Dorsolateral prefrontal cortex (tissue), 120 donors: ENCODE measurements at regions of chr11 and their contacts with region 1.

Region 1: DNA sequence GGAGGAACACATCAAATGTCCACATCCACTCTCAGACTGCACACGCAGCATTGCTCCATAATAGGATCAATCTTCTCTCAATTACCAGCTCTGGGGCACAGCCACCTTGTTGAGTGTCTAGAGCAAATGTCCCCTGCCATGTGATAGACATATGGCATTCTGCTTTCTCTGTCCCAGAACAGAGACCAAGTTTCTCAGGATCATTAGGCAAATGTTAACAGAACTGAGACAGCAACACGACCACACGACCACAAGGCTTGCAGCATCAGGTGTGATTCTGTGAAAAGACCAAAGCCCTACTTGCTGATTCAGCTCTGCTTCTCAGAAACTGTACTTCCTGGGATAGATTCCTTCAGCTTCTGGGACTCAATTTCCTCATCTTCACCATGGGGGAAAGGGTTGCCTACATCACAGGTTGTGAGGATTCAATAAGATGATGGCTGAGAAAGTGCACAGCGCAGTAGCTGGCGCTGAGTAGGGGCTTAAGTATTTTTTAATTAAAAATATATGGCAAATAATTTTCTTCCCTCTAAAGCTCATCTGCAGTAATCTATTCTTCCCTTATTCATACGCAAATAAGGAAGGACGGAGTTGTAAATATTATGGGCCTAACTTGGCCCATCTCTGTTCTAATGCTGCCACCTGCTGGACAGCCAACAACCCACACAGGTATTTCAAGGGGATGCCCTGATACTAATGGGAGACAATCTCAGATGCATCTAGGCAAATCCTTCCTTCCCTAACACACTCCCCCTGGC is 54.3 kb upstream of the USP47 start:
- DNase-seq: peak; percentile 64 to 88 (median 78)
- H3K4me3 ChIP-seq: no peak overlapping the region
- H3K27ac ChIP-seq: no peak overlapping the region
- H3K27me3 ChIP-seq: no peaks in the 10 kb centered on the region
- CTCF ChIP-seq: peak; percentile 86 to 100 (median 94)

Region 2: GRCh38 chr11:10792398-10792975 is 995.0 kb before region 1 on chr11:
- intact Hi-C with region 1: loop called (anchors 5 kb)
- DNase-seq: peak; percentile 47 to 83 (median 68)
- H3K4me3 ChIP-seq: peak overlapping the region in 27 of 59 donors; percentile 4 to 51 (median 29)
- H3K27ac ChIP-seq: no peak overlapping the region
- H3K27me3 ChIP-seq: no peaks in the 10 kb centered on the region
- CTCF ChIP-seq: peak; percentile 33 to 91 (median 84)

Region 3: DNA sequence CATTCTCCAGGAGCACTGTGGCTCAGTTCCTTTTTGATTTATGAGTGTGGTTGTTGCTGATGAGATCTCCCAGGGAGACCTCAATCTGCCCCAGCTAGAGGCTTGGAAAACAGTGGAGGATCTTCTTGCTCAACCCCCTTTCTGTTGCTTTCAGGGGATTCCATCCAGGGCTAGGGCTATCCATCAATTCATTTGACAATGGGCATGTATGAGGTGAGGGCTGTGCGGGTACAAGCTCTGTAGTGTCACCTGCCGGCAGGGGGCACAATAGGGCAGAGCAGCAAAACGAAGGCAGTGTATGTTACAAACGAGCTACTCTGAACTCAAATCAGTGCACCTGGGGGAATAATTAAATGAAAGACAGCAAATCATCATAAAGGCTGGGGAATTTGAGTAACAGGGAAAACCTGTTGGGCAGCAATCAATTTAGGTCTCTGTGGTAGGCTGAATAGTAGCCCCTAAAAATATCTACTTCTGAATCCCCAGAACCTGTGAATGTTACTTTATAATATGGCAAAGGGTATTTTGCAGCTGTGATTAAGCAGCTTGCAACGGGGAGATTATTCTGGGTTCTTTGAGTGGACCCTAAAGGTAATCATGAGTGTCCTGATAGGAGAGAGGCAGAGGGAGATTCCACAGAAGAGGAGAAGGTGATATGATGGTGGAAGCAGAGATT is 759.3 kb before region 1 on chr11:
- intact Hi-C with region 1: loop called in 1 of 2 experiments (anchors 5 kb)
- DNase-seq: peak in 9 of 10 donors; percentile 24 to 71 (median 63)
- H3K4me3 ChIP-seq: no peak overlapping the region
- H3K27ac ChIP-seq: no peak overlapping the region
- H3K27me3 ChIP-seq: no peaks in the 10 kb centered on the region
- CTCF ChIP-seq: peak in 55 of 56 donors; percentile 33 to 75 (median 63)

Region 4: GRCh38 chr11:11493698-11494097 is 293.8 kb before region 1 on chr11:
- intact Hi-C with region 1: loop called in 1 of 2 experiments (anchors 2 kb)
- DNase-seq: no peak
- H3K4me3 ChIP-seq: no peak overlapping the region
- H3K27ac ChIP-seq: no peak overlapping the region
- H3K27me3 ChIP-seq: no peaks in the 10 kb centered on the region
- CTCF ChIP-seq: peak in 11 of 56 donors; percentile 7 to 43 (median 25)

Region 5: DNA sequence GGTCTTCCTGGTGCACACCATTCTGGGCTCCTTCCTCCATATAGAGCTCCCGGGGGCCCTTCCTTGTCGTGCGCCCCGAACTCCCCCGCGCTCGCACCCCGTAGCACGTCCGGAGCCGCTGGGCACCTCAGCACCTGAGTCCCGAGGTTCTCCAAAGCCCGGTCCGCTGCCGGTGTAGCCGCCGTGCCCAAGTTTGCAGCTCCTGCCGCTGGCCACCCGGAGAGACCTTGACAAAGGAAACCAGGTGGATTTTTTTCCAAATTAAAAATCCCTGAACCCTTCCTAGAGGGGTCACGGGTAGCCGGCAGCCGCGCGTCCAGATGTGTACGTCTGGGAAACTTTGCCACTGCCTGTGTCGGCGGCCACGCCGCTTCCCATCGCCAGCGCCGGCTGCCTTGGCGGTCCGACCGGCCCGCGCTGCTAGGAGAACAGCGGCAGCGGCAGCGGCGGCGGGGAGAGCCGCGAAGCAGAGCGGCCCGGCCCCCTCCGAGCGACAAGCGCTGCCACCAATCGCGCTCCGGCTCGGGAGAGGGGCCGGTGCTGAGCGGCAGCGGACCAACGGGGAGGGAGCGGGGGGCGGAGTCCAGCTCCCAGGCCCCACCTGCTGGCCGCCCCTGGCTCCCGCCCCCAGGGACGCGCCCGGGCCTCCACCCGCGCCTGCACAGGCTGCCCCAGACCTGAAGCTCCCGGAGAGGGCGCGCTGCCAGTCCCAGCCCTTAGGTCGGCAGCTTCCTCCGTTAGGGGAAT is 165.7 kb before region 1 on chr11 and contains the start of gene GALNT18:
- intact Hi-C with region 1: loop called in 1 of 2 experiments (anchors 5 kb)
- DNase-seq: peak; percentile 80 to 96 (median 90)
- H3K4me3 ChIP-seq: peak within 1 kb of the TSS; percentile 53 to 96 (median 82)
- H3K27ac ChIP-seq: peak within 1 kb of the TSS in 50 of 59 donors; percentile 1 to 88 (median 68)
- H3K27me3 ChIP-seq: no peaks in the 10 kb centered on the region
- CTCF ChIP-seq: peak in 55 of 56 donors; percentile 30 to 84 (median 67)
- total RNA-seq, gene GALNT18: 15.6 to 50.3 (median 32.5) TPM

Region 6: GRCh38 chr11:11876458-11876857 is 89.0 kb after region 1 on chr11:
- intact Hi-C with region 1: no loop called
- DNase-seq: no peak
- H3K4me3 ChIP-seq: no peak overlapping the region
- H3K27ac ChIP-seq: no peak overlapping the region
- H3K27me3 ChIP-seq: no peaks in the 10 kb centered on the region
- CTCF ChIP-seq: peak in 6 of 56 donors; percentile 5 to 26 (median 16)